Heart right ventricle (tissue), 16 donors: ENCODE measurements at regions of chr9 and their contacts with region 1.

Region 1: DNA sequence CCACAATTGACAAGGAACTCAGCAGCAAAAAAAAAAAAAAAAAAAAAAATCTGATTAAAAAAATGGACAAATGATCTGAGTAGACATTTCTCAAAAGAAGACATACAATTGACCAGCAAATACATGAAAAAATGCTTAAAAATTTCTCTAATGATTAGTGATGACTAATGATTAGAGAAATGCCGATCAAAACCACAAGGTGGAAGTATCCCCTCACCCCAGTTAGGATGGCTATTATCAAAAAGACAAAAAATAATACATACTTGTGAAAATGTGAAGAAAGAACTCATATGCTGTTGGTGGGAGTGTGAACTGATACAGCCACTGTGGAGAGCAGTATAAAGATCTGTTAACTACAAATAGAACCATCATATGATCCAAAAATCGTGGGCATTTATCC is 245.3 kb downstream of the OSTF1 start:
- DNase-seq: no peak
- ATAC-seq: peak in 1 of 8 donors; percentile 49
- H3K4me3 ChIP-seq: no peak overlapping the region
- H3K27ac ChIP-seq: no peak overlapping the region
- H3K4me1 ChIP-seq: no peaks in the 10 kb centered on the region
- H3K27me3 ChIP-seq: no peaks in the 10 kb centered on the region
- CTCF ChIP-seq: peak; percentile 16 to 68 (median 47)

Region 2: GRCh38 chr9:75274781-75275180 is 58.8 kb before region 1 on chr9:
- intact Hi-C with region 1: loop called in 1 of 10 experiments (anchors 10 kb)
- DNase-seq: no peak
- ATAC-seq: no peak
- H3K4me3 ChIP-seq: no peak overlapping the region
- H3K27ac ChIP-seq: no peak overlapping the region
- H3K4me1 ChIP-seq: no peaks in the 10 kb centered on the region
- H3K27me3 ChIP-seq: no peaks in the 10 kb centered on the region
- CTCF ChIP-seq: no peak

Region 3: GRCh38 chr9:75389101-75389500 is 55.5 kb after region 1 on chr9:
- intact Hi-C with region 1: no loop called
- DNase-seq: no peak
- ATAC-seq: peak in 1 of 8 donors; percentile 25
- H3K4me3 ChIP-seq: no peak overlapping the region
- H3K27ac ChIP-seq: no peak overlapping the region
- H3K4me1 ChIP-seq: peaks cover 0 to 3% (median 0%) of the 10 kb centered on the region in 9 donors
- H3K27me3 ChIP-seq: no peaks in the 10 kb centered on the region
- CTCF ChIP-seq: no peak

Region 4: GRCh38 chr9:75455444-75455921 is 121.9 kb after region 1 on chr9:
- intact Hi-C with region 1: loop called in 1 of 10 experiments (anchors 10 kb)
- DNase-seq: peak in 1 of 2 donors; percentile 12
- ATAC-seq: peak in 7 of 8 donors; percentile 41 to 67 (median 55)
- H3K4me3 ChIP-seq: no peak overlapping the region
- H3K27ac ChIP-seq: peak overlapping the region in 2 of 10 donors; percentile 3 to 59
- H3K4me1 ChIP-seq: peaks cover 4 to 41% (median 15%) of the 10 kb centered on the region in 9 donors
- H3K27me3 ChIP-seq: no peaks in the 10 kb centered on the region
- CTCF ChIP-seq: no peak